Endothelial cell of umbilical vein (primary cell): ENCODE measurements at regions of chrX and their contacts with region 1.

Region 1: GRCh38 chrX:46978341-46979291 is 66.4 kb downstream of the JADE3 start:
- DNase-seq: peak; percentile 87
- H3K4me3 ChIP-seq: peak overlapping the region in 1 of 3 experiments; percentile 69
- H3K27ac ChIP-seq: peak overlapping the region; percentile 97
- H3K4me1 ChIP-seq: peaks cover 2% of the 10 kb centered on the region
- H3K27me3 ChIP-seq: no peaks in the 10 kb centered on the region
- CTCF ChIP-seq: peak; percentile 65 to 66
- POLR2A ChIP-seq: no peak

Region 2: DNA sequence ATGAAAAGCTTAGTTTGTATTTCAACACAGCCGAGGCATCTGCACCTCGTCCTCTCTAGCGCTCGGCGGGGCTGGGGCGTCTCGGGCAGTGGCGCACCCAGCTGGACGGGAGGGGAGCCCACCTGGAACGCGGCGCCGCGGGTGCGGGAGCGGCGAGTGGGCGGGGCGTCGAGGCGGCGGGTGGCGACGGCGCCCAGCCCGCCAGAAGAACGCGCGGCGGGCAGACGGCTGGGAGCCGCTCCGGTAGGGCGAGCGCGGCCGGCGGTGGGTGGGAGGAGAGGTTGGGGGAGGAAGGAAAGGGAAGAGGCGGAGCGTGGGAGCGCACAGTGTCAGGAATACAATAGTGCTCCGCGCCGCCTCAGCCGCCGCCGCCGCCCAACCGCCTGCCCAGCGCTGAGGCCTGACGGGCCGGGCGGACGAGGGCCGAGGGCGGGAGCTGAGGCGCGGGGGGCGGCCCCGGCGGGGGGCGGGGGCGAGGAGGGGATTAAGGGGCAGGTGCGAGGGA is 66.5 kb before region 1 on chrX and contains the start of gene JADE3:
- CTCF ChIA-PET with region 1: interaction called, 17 read pairs
- POLR2A ChIA-PET with region 1: no interaction called
- dilution Hi-C with region 1: no loop called
- intact Hi-C with region 1: loop called (anchors 1 kb)
- DNase-seq: peak; percentile 75
- H3K4me3 ChIP-seq: peak within 1 kb of the TSS; percentile 72 to 79 (median 75)
- H3K27ac ChIP-seq: peak within 1 kb of the TSS; percentile 45
- H3K4me1 ChIP-seq: peaks cover 11% of the 10 kb centered on the region
- H3K27me3 ChIP-seq: no peaks in the 10 kb centered on the region
- CTCF ChIP-seq: no peak
- POLR2A ChIP-seq: no peak
- total RNA-seq, gene JADE3: 16.3 and 18.4 TPM in 2 replicates

Region 3: DNA sequence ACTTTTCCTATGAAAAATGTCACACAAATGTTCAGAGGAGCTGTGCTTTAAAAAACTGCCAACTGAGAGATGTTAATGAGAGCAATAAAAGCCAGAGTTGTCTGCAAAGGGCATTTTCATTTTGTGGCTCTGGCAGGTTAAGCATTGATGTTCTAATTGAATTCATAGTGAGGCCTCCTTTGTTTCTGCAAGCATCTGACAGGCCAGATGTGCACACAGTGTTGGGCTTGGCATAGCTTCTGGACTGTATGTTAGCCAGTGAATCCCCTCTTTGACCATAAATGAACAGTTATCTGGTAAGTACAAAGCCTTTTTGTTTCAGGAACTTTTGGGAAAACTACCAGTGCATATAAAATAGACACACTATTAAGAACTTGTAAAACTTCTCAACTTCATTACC is 15.5 kb after region 1 on chrX:
- CTCF ChIA-PET with region 1: no interaction called
- POLR2A ChIA-PET with region 1: no interaction called
- dilution Hi-C with region 1: no loop called
- intact Hi-C with region 1: no loop called
- DNase-seq: peak; percentile 4
- H3K4me3 ChIP-seq: no peak overlapping the region
- H3K27ac ChIP-seq: no peak overlapping the region
- H3K4me1 ChIP-seq: peaks cover 6% of the 10 kb centered on the region
- H3K27me3 ChIP-seq: no peaks in the 10 kb centered on the region
- CTCF ChIP-seq: no peak
- POLR2A ChIP-seq: no peak